H1 (cell line): ENCODE measurements at regions of chr7 and their contacts with region 1.

Region 1: GRCh38 chr7:100763556-100764140 is 30.3 kb downstream of the ZAN start:
- DNase-seq: no peak
- H3K4me3 ChIP-seq: no peak overlapping the region
- H3K27ac ChIP-seq: no peak overlapping the region
- H3K4me1 ChIP-seq: peaks cover 0 to 2% (median 0%) of the 10 kb centered on the region in 4 experiments; a peak in 3 of 7 replicates
- H3K27me3 ChIP-seq: no peaks in the 10 kb centered on the region; a peak in 1 of 7 replicates
- CTCF ChIP-seq: no peak
- EP300 ChIP-seq: no peak
- POLR2A ChIP-seq: no peak
- RAD21 ChIP-seq: no peak

Region 2: DNA sequence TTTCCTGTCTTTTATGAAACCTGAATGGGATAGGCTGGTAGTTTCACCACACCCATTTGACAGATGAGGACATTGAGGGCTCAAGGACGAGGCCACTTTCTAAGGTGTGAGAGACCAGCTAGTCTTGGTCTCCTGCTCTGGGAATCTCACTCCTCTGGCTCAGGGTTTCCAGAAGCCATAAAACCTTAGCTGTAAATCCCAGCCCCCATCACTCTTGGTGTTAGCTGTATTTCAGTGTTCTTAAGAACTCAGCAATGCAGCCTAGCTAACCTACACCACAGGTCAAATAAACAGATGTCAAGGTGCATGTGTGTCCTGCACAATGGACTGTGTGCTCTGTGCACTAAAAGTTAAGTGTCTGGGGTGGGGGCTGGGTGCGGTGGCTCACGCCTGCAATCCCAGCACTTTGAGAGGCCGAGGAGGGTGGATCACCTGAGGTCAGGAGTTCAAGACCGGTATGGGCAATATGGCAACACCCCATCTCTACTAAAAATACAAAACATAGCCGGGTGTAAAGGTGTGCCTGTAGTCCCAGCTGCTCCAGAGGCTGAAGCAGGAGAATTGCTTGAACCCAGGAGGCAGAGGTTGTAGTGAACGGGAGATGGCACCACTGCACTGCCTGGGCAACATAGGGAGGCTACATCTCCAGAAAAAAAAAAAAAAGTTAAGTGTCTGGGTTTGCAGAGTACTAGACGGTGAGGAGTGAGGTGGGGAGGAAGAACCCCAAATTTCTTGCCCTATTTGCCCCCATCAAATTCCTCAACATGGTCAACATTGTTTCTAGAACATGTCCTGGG is 43.9 kb before region 1 on chr7:
- CTCF ChIA-PET with region 1: interaction called, 10 read pairs
- POLR2A ChIA-PET with region 1: interaction called, 3 read pairs
- DNase-seq: no peak
- H3K4me3 ChIP-seq: peak overlapping the region; percentile 32 to 71 (median 50)
- H3K27ac ChIP-seq: no peak overlapping the region
- H3K4me1 ChIP-seq: peaks cover 0 to 5% (median 2%) of the 10 kb centered on the region in 4 experiments; a peak in 5 of 7 replicates
- H3K27me3 ChIP-seq: peaks cover 7 to 26% (median 26%) of the 10 kb centered on the region in 4 experiments
- CTCF ChIP-seq: peak; percentile 9 to 29 (median 22)
- EP300 ChIP-seq: no peak
- POLR2A ChIP-seq: no peak
- RAD21 ChIP-seq: peak; percentile 47 to 53

Region 3: GRCh38 chr7:100785878-100786277 is 22.2 kb after region 1 on chr7:
- CTCF ChIA-PET with region 1: interaction called, 10 read pairs
- POLR2A ChIA-PET with region 1: interaction called, 4 read pairs
- DNase-seq: peak in 1 of 2 experiments; percentile 50
- H3K4me3 ChIP-seq: no peak overlapping the region
- H3K27ac ChIP-seq: no peak overlapping the region
- H3K4me1 ChIP-seq: peaks cover 0 to 3% (median 0%) of the 10 kb centered on the region in 4 experiments; a peak in 2 of 7 replicates
- H3K27me3 ChIP-seq: no peaks in the 10 kb centered on the region
- CTCF ChIP-seq: no peak
- EP300 ChIP-seq: no peak
- POLR2A ChIP-seq: no peak
- RAD21 ChIP-seq: peak in 1 of 2 experiments; percentile 6; a peak in 1 of 4 replicates